B cell (primary cell): ENCODE measurements at regions of chr3 and their contacts with region 1.

Region 1: DNA sequence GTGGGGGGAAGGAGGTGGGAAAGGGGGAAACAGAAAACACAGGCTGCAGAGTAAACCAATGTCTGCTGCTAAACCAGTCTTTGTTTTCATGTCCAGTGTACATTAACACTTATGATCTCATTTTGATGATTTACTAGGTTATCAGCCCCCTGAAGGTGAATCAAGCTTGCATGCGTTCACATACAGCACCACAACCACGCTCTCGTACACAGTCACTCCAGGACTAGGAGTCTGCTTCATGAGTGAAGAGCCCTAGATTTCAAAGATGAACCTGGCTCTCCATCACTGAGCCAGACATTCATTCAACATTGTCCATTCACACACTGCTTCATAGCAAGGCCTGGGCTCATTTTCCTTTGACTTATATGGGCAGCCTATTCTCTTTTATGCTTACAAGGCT is 51.7 kb upstream of the TRIM59 start:
- DNase-seq: no peak
- ATAC-seq: no peak
- H3K4me3 ChIP-seq: no peak overlapping the region
- H3K4me3 Mint-ChIP-seq: no peak overlapping the region
- H3K27ac ChIP-seq: no peak overlapping the region
- H3K27ac Mint-ChIP-seq: no peak overlapping the region
- H3K4me1 ChIP-seq: no peaks in the 10 kb centered on the region
- H3K4me1 Mint-ChIP-seq: no peaks in the 10 kb centered on the region
- H3K27me3 ChIP-seq: no peaks in the 10 kb centered on the region
- H3K27me3 Mint-ChIP-seq: no peaks in the 10 kb centered on the region
- CTCF ChIP-seq: no peak

Region 2: DNA sequence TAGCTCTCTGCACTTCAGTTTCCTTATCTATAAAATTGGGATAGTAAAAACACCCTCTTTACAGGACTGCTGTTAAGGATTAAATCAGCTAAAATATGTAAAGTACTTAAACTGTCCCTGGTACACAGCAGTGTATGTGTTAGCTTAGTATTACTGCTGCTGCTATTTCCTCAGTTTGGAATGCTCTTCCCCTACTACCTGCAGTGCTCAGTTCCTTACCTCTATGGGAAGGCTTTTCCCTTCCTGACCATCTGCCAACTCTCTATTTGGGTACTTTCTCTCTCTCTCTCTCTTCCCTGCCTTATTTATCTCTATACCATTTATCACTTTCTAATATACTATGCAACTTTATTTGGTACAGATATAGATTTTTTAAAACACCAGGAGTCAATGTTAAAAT is 37.6 kb after region 1 on chr3:
- CTCF ChIA-PET with region 1: no interaction called
- POLR2A ChIA-PET with region 1: no interaction called
- intact Hi-C with region 1: loop called (anchors 5 kb)
- DNase-seq: no peak
- ATAC-seq: no peak
- H3K4me3 ChIP-seq: no peak overlapping the region
- H3K4me3 Mint-ChIP-seq: no peak overlapping the region
- H3K27ac ChIP-seq: peak overlapping the region in 1 of 2 donors; percentile 9
- H3K27ac Mint-ChIP-seq: no peak overlapping the region
- H3K4me1 ChIP-seq: no peaks in the 10 kb centered on the region
- H3K4me1 Mint-ChIP-seq: peaks cover 31% of the 10 kb centered on the region
- H3K27me3 ChIP-seq: no peaks in the 10 kb centered on the region
- H3K27me3 Mint-ChIP-seq: no peaks in the 10 kb centered on the region
- CTCF ChIP-seq: no peak